Colonic mucosa (tissue), 4 donors: ENCODE measurements at regions of chr13 and their contacts with region 1.

Region 1: GRCh38 chr13:102580552-102581169 is 16.1 kb upstream of the TPP2 start:
- DNase-seq: peak; percentile 55
- H3K4me3 ChIP-seq: no peak overlapping the region
- H3K27ac ChIP-seq: no peak overlapping the region
- H3K4me1 ChIP-seq: no peaks in the 10 kb centered on the region
- H3K27me3 ChIP-seq: no peaks in the 10 kb centered on the region
- CTCF ChIP-seq: peak; percentile 74

Region 2: GRCh38 chr13:102724923-102725322 is 144.3 kb after region 1 on chr13:
- intact Hi-C with region 1: loop called (anchors 2 kb)
- DNase-seq: no peak
- H3K4me3 ChIP-seq: no peak overlapping the region
- H3K27ac ChIP-seq: no peak overlapping the region
- H3K4me1 ChIP-seq: no peaks in the 10 kb centered on the region
- H3K27me3 ChIP-seq: no peaks in the 10 kb centered on the region
- CTCF ChIP-seq: no peak

Region 3: GRCh38 chr13:102773441-102774215 is 193.0 kb after region 1 on chr13 and contains the start of gene TEX30:
- intact Hi-C with region 1: loop called (anchors 10 kb)
- DNase-seq: peak; percentile 83
- H3K4me3 ChIP-seq: peak within 1 kb of the TSS; percentile 82
- H3K27ac ChIP-seq: peak within 1 kb of the TSS; percentile 77
- H3K4me1 ChIP-seq: no peaks in the 10 kb centered on the region
- H3K27me3 ChIP-seq: no peaks in the 10 kb centered on the region
- CTCF ChIP-seq: no peak
- total RNA-seq, gene TEX30: 3.7 to 8.3 TPM